Calu3 (cell line): ENCODE measurements at regions of chr14 and their contacts with region 1.

Region 1: DNA sequence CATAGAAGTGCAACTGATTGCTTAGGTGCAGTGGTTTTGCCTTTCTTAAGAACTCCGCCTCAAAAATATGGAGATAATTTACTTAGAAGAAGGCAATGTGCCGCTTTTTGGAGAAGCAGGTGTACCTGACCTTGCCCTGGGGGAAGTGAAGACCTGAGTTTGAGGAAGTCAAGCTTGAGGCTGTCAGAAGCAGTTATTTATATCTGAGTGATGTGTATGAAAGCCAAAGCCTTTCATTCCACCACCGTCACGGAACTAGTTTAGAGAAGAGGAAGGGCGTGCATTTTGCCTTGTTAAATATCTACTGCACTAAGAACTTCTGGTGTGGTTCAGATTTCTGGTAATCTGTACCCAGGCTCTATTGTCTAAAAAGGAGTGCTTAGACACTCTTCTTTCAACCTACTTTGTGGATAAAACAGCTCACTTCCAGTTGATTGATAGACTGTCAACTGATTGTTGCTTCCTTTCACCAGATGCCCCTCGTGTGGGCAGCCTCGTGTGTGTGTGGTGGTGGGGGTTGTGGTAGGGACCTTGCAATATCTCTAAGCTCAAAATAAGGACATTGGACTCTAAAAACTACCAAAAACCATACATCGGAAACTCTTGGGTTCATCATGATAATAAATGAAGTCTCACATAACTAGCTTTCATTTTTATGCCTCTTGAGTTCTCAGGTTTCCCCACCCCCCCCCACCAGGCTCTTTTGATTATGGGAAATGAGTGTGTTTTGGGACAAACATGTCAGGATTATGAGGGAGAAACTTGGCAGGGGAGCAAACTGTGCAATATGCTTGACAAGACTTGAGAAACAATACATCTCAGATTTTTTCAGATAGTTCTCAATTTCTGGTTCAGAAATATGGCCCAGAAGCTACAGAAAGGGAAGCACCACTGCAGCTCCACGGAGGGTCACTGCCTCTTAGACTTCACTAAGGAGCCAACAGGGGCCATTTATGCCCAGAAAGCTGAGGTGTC is 78.6 kb downstream of the ARF6 start:
- DNase-seq: no peak
- H3K4me3 Mint-ChIP-seq: peak overlapping the region; percentile 7
- H3K27ac Mint-ChIP-seq: peak overlapping the region; percentile 85
- H3K4me1 Mint-ChIP-seq: peaks cover 78% of the 10 kb centered on the region
- H3K27me3 Mint-ChIP-seq: no peaks in the 10 kb centered on the region
- CTCF ChIP-seq: no peak

Region 2: DNA sequence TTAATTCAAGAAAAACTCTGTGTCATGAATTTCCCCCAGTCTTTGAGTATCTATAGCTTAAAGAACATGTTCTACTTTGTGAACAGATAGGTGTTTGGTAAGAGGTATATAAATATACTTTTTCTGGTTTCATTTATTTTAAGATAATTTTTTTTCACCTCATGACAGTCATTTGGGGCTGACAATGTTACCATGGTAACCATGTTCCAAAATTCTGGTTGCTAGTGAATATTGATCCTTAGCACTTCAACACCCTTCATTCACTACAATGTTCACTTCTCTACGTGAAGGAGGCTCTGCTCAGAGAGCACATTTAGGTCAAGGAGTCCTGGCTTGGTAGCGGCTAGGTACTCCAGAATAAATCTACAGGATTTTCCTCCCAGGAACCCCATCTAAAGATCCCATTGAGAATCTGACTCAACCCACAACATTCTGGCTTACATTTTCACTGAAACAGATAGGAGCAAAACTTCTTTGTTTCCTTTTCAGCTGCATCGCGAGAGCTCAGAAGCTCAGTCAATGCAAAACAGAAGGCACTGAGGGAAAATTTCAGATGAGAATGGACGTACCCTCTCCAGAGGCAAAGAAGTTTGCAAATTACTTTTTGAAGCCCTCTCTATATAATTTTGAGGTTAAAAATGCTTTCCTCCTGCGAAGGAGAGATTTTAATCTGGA is 15.0 kb after region 1 on chr14:
- CTCF ChIA-PET with region 1: interaction called, 10 read pairs
- intact Hi-C with region 1: loop called (anchors 1 kb)
- DNase-seq: no peak
- H3K4me3 Mint-ChIP-seq: no peak overlapping the region
- H3K27ac Mint-ChIP-seq: peak overlapping the region; percentile 46
- H3K4me1 Mint-ChIP-seq: peaks cover 55% of the 10 kb centered on the region
- H3K27me3 Mint-ChIP-seq: no peaks in the 10 kb centered on the region
- CTCF ChIP-seq: no peak

Region 3: DNA sequence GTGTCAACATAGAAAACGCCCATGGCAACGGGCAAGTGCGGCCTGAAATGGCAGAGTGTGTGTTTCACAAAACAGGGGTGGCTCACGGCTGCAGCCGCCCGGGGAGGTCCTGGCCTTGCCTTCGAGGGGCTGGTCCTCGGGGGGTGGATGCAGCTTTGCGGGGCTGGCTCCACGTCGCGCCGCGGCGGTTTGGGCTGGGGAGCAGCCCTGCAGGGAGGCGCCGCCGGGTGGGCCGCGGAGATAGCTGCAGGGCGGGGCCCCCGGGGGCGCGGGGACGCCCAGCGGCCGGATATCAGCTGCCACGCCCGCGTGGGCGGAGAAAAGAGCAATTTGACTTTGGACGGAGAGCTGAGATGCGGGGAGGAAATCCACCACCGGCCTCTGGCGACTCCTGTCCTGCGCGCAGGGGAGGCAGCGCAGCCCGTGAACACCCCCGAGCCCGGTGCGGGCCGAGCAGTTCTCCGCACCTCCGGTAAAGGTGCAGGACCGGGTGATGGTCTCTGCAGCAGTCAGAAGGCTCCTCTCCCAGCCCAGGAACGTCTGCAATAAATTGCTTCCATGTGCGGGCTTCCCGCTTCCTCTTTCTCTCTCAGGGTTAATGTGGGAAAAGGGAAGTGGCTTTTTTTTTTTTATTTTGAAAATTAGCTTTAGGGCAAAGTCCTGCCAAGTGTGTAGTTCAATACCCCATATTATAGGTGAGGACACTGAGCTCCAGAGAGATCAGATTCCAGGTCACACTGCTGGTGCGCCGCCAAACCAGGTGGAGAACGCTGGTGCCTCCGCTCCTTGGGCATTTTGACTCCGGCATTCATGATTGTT is 32.0 kb after region 1 on chr14:
- CTCF ChIA-PET with region 1: interaction called, 9 read pairs
- intact Hi-C with region 1: loop called (anchors 2 kb)
- DNase-seq: peak; percentile 86
- H3K4me3 Mint-ChIP-seq: peak overlapping the region; percentile 69
- H3K27ac Mint-ChIP-seq: peak overlapping the region; percentile 99
- H3K4me1 Mint-ChIP-seq: peaks cover 66% of the 10 kb centered on the region
- H3K27me3 Mint-ChIP-seq: no peaks in the 10 kb centered on the region
- CTCF ChIP-seq: no peak